Head of caudate nucleus (tissue), 42 donors: ENCODE measurements at regions of chr12 and their contacts with region 1.

Region 1: DNA sequence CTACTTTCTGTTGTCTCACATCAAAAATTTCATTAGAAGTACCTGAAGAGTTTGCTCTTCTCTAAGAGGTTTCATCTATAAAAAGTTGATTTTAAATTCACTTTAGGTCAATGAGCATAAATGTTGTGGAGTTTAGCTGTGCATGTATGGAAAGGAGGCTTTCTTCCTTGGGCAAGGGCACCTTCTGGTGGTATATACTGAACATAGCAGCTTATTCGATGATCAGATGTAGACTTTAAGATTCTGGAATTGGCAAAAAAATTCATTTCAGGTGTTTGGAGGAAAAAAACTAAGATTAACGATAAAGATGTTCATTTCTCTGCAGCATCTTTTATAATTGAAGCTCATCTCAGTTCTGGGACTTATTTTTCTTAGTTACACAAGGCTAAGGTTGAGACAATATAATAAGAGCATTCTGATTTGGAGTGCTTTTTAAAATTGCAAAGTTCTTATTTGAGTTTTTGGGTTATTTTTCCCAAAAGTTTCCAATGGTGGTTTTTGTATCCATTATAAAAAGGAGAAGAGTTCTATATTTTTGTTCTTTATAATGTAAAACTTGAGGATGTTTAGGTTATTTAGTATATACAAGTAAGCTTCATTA is 46.8 kb downstream of the TMEM117 start:
- DNase-seq: peak in 25 of 42 donors; percentile 10 to 75 (median 47)

Region 2: GRCh38 chr12:43444940-43445564 is 437.6 kb before region 1 on chr12:
- intact Hi-C with region 1: loop called (anchors 10 kb)
- DNase-seq: peak in 39 of 42 donors; percentile 6 to 86 (median 65)

Region 3: DNA sequence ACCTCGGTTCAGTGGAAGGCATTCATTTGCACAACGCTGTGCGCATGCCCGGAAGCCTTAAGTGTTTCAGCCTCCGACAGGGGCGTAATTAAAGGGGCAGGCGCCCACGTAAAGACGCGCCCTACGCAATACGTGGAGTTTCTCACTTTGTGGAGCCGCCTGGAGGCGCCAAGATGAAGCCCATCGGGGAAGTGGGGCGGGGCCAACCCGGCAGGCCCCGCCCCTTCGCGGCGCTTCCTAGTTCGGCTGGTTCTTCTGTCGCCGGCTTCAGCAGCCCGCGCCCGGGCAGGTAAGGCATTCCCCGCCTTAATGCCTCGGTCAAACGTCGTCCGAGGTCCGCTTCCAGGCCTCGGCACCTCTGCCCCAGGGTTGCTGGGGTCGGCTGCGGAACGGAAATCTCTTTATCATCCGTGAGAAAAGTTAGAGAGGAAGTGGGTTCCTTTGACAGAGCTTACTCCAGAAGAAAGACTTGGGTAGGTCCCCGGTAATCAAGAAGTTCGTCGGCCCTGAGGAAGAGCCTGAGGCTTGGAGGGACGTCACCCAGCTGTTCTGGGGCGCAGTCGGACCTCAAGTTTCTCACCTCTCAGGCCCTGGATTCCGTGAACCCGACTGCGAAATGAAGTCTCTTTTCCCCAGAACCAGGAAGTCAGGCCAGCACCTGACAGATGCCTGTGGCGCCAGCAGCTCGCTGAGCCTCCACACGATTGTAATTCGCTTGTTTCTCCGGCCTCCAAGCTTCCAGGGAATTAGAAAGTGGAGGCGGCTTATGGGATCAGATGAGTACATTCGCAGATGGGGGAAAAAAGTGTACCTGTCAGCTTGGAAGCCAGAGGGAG is 123.7 kb before region 1 on chr12 and contains the starts of genes IRAK4 and PUS7L:
- intact Hi-C with region 1: loop called (anchors 10 kb)
- DNase-seq: peak; percentile 89 to 98 (median 95)

Region 4: DNA sequence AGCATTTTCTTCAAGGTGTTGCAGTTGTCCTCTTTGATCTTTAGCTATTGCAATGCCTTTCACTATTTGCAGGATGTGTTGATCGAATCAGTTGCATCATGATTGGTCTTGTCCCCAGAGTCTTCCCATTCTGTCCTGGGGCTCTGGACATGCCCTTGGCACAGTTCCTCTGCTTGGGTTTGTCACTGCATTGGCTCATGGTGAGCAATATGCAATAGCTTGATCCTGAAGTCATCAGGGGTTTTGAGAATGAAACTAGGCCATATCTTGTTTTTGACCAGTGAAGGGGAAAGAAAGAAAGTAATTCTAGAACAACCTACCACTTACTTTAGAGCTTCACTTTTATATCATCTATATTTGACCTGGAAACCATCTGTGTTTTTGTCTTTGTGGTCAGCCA is 234.7 kb after region 1 on chr12:
- intact Hi-C with region 1: no loop called
- DNase-seq: no peak